ENCODE measurements at regions of chr7 and their contacts with region 1.

Region 1: GRCh38 chr7:147245292-147245691 is 1128.7 kb downstream of the CNTNAP2 start:
- DNase-seq: no peak
- ATAC-seq: no peak

Region 2: GRCh38 chr7:146982482-146982881 is 262.8 kb before region 1 on chr7:
- intact Hi-C with region 1: no loop called
- DNase-seq: no peak
- ATAC-seq: no peak

Region 3: GRCh38 chr7:147136352-147136751 is 108.9 kb before region 1 on chr7:
- intact Hi-C with region 1: no loop called
- DNase-seq: no peak
- ATAC-seq: no peak

Region 4: DNA sequence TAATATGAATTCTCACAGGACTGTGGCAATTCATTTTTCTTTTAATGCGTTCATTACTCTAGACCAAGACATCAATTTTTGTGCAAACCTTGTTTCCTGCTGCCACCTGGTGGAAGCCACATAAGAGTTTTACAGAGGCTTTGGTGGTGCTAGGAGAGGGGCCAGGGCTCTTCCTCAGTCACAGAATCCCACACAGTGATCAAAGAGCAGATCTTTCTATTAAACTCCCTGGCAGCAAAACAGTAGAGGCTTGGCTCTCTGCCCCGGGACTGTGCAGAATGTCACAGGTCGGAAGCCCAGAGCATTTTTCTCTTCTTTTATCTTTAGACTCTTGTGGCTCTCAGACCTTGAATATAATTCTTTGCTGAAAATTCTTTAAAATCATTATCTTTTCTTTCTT is 838.8 kb after region 1 on chr7:
- intact Hi-C with region 1: loop called (anchors 5 kb)
- DNase-seq: no peak
- ATAC-seq: peak; percentile 63

Region 5: GRCh38 chr7:148262721-148263229 is 1017.5 kb after region 1 on chr7:
- intact Hi-C with region 1: loop called (anchors 10 kb)
- DNase-seq: peak; percentile 75
- ATAC-seq: peak; percentile 91

Measured in Right ventricle myocardium superior (tissue), 1 donor.